CD4-positive, alpha-beta T cell (primary cell): ENCODE measurements at regions of chr3 and their contacts with region 1.

Region 1: DNA sequence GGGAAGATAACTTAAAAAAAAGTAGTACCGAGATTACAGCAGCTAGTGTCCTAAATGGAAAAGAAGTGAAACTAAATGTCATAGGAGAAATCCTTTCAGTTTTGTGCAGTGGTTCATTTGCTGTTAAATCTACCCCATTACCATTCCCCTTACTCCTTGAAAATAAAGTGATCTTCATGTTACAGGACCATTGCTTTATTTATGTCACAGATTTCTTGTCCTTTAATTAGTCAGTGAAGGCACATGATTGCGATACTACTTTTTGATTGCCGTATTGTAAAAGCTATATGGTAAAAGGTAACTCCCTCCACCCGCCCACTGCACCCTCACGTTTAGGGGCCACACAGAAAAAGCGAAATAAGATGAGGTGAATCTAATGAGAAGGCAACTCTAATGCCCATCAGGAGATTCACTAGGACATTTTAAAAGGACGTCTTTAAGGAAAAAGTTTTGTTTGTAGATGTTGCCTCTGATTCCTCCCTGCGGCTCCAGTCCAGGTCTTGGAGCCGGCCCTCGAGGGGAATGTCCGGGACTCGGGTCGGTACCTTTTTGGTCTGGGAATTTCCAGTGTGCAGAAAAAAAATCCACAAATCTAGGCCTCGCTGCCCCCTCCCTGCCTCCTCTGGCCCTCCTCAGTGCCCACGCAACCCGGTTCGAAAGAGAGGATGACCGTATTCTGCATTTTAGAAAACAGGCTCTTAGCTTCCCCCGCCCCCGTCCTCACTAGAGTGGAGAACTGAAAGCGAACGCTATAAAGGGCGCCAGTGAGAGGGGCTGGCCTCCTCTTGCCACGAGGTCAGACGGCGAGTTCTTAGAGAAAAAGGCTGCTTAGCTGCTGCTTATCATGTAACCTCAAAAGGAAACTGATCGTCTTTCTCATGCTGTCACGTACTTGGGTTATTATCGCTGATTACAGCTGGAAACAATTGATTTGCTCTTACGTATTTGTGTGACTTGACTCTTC is 21.8 kb upstream of the NFKBIZ start:
- DNase-seq: peak; percentile 55 to 93 (median 66)
- ATAC-seq: peak; percentile 79
- H3K4me3 ChIP-seq: peak overlapping the region; percentile 70
- H3K4me3 Mint-ChIP-seq: peak overlapping the region; percentile 98
- H3K27ac ChIP-seq: peak overlapping the region; percentile 90 to 93
- H3K27ac Mint-ChIP-seq: peak overlapping the region; percentile 99
- H3K4me1 ChIP-seq: peaks cover 31% of the 10 kb centered on the region
- H3K4me1 Mint-ChIP-seq: peaks cover 66% of the 10 kb centered on the region
- H3K27me3 ChIP-seq: no peaks in the 10 kb centered on the region
- H3K27me3 Mint-ChIP-seq: no peaks in the 10 kb centered on the region
- CTCF ChIP-seq: no peak

Region 2: GRCh38 chr3:101243285-101244211 is 583.9 kb before region 1 on chr3:
- CTCF ChIA-PET with region 1: no interaction called
- POLR2A ChIA-PET with region 1: no interaction called
- intact Hi-C with region 1: no loop called
- DNase-seq: no peak
- ATAC-seq: no peak
- H3K4me3 ChIP-seq: no peak overlapping the region
- H3K4me3 Mint-ChIP-seq: no peak overlapping the region
- H3K27ac ChIP-seq: no peak overlapping the region
- H3K27ac Mint-ChIP-seq: no peak overlapping the region
- H3K4me1 ChIP-seq: no peaks in the 10 kb centered on the region
- H3K4me1 Mint-ChIP-seq: no peaks in the 10 kb centered on the region
- H3K27me3 ChIP-seq: no peaks in the 10 kb centered on the region
- H3K27me3 Mint-ChIP-seq: no peaks in the 10 kb centered on the region
- CTCF ChIP-seq: no peak

Region 3: GRCh38 chr3:101281521-101282030 is 545.9 kb before region 1 on chr3:
- CTCF ChIA-PET with region 1: no interaction called
- POLR2A ChIA-PET with region 1: no interaction called
- intact Hi-C with region 1: no loop called
- DNase-seq: no peak
- ATAC-seq: no peak
- H3K4me3 ChIP-seq: no peak overlapping the region
- H3K4me3 Mint-ChIP-seq: no peak overlapping the region
- H3K27ac ChIP-seq: no peak overlapping the region
- H3K27ac Mint-ChIP-seq: no peak overlapping the region
- H3K4me1 ChIP-seq: no peaks in the 10 kb centered on the region
- H3K4me1 Mint-ChIP-seq: no peaks in the 10 kb centered on the region
- H3K27me3 ChIP-seq: no peaks in the 10 kb centered on the region
- H3K27me3 Mint-ChIP-seq: no peaks in the 10 kb centered on the region
- CTCF ChIP-seq: no peak

Region 4: GRCh38 chr3:101842245-101842934 is 14.9 kb after region 1 on chr3:
- CTCF ChIA-PET with region 1: no interaction called
- POLR2A ChIA-PET with region 1: interaction called, 221 read pairs
- intact Hi-C with region 1: loop called in 1 of 2 experiments (anchors 2 kb)
- DNase-seq: no peak
- ATAC-seq: no peak
- H3K4me3 ChIP-seq: no peak overlapping the region
- H3K4me3 Mint-ChIP-seq: no peak overlapping the region
- H3K27ac ChIP-seq: no peak overlapping the region
- H3K27ac Mint-ChIP-seq: no peak overlapping the region
- H3K4me1 ChIP-seq: no peaks in the 10 kb centered on the region
- H3K4me1 Mint-ChIP-seq: no peaks in the 10 kb centered on the region
- H3K27me3 ChIP-seq: no peaks in the 10 kb centered on the region
- H3K27me3 Mint-ChIP-seq: no peaks in the 10 kb centered on the region
- CTCF ChIP-seq: no peak

Region 5: DNA sequence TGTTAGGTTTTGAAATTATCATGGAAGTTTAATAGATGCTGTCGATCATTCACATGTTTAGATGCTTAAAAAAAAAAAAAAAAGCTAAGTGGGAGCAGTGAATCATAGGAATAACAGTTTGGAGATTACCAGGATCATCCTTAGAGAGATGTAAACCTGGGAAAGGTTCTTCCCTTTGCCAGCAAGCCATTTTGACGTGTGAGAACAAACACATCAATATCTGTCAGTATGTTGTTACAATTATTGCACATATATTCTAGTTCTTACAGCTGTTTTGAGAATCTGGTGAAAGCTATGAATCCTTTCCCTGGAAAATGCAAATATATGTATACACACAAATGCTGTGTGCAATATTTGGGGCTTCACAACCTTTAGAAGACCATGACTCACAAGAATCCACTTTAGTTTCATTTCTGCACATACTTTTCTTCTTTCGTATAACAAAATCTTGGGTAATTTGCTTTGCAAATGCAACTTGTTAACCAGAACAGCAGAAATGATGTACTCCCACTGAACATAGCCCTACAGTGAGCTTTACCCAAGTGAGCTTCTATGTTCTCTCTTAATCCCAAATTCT is 33.8 kb after region 1 on chr3:
- CTCF ChIA-PET with region 1: no interaction called
- POLR2A ChIA-PET with region 1: no interaction called
- intact Hi-C with region 1: loop called (anchors 5 kb)
- DNase-seq: no peak
- ATAC-seq: peak; percentile 9
- H3K4me3 ChIP-seq: no peak overlapping the region
- H3K4me3 Mint-ChIP-seq: no peak overlapping the region
- H3K27ac ChIP-seq: no peak overlapping the region
- H3K27ac Mint-ChIP-seq: peak overlapping the region; percentile 4
- H3K4me1 ChIP-seq: peaks cover 7% of the 10 kb centered on the region
- H3K4me1 Mint-ChIP-seq: peaks cover 31% of the 10 kb centered on the region
- H3K27me3 ChIP-seq: no peaks in the 10 kb centered on the region
- H3K27me3 Mint-ChIP-seq: no peaks in the 10 kb centered on the region
- CTCF ChIP-seq: no peak